CD4-positive, alpha-beta memory T cell (primary cell): ENCODE measurements at regions of chr3 and their contacts with region 1.

Region 1: DNA sequence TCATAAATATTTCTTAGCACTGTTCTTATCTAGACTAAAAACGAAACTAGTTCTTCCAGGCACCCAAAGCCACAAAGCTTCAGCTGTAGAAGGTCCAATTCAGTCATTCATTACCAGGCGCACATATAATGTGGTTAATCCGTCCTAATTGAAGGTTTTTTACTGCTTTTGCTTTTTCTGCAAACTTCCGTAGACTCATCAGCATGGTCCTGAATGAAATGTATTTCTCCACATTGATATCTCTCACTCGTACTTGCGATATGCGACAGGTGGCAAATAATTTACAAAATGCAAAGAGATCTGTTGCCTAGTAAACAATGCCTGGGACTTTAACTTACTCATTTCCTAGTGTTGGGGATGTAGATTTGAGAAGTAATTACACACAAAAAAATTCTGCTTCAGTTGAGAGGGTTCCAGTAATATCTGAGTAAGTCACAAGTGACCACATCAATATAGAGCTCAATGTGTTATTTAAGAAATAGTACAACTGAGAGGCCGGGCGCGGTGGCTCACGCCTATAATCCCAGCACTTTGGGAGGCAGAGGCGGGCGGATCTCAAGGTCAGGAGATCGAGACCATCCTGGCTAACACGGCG is 75.0 kb upstream of the MBNL1 start:
- DNase-seq: peak; percentile 63 to 79 (median 68)
- H3K4me3 ChIP-seq: peak overlapping the region; percentile 31 to 37
- H3K4me3 Mint-ChIP-seq: peak overlapping the region; percentile 81 to 97 (median 90)
- H3K27ac ChIP-seq: peak overlapping the region; percentile 62
- H3K27ac Mint-ChIP-seq: peak overlapping the region; percentile 89 to 98 (median 92)
- H3K4me1 ChIP-seq: peaks cover 82% of the 10 kb centered on the region
- H3K4me1 Mint-ChIP-seq: peaks cover 60 to 85% (median 72%) of the 10 kb centered on the region in 4 donors
- H3K27me3 ChIP-seq: no peaks in the 10 kb centered on the region
- H3K27me3 Mint-ChIP-seq: no peaks in the 10 kb centered on the region

Region 2: DNA sequence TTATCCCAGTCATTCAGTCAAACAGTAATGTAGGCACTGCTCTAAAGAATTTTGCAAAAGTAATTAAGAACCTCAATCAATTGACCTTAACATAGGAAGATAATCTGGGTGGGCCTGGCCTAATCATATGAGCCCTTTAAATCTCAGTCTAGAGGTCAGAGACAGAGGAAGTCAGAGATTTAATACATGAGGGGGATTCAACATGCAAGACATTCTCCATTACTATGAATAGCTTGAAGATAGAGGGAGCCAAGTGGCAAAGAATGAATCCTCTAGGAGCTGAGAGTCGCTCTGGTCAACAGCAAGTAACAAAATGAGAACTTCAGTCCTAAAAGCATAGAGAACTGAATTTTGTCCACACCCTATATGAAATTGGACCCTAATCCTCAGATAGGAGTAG is 35.9 kb after region 1 on chr3:
- CTCF ChIA-PET with region 1: interaction called, 4 read pairs
- POLR2A ChIA-PET with region 1: interaction called, 21 read pairs
- intact Hi-C with region 1: no loop called
- DNase-seq: no peak
- H3K4me3 ChIP-seq: no peak overlapping the region
- H3K4me3 Mint-ChIP-seq: peak overlapping the region in 2 of 8 donors; percentile 1 to 13
- H3K27ac ChIP-seq: no peak overlapping the region
- H3K27ac Mint-ChIP-seq: peak overlapping the region in 1 of 7 donors; percentile 1
- H3K4me1 ChIP-seq: peaks cover 42% of the 10 kb centered on the region
- H3K4me1 Mint-ChIP-seq: peaks cover 34 to 56% (median 44%) of the 10 kb centered on the region in 4 donors
- H3K27me3 ChIP-seq: no peaks in the 10 kb centered on the region
- H3K27me3 Mint-ChIP-seq: no peaks in the 10 kb centered on the region

Region 3: DNA sequence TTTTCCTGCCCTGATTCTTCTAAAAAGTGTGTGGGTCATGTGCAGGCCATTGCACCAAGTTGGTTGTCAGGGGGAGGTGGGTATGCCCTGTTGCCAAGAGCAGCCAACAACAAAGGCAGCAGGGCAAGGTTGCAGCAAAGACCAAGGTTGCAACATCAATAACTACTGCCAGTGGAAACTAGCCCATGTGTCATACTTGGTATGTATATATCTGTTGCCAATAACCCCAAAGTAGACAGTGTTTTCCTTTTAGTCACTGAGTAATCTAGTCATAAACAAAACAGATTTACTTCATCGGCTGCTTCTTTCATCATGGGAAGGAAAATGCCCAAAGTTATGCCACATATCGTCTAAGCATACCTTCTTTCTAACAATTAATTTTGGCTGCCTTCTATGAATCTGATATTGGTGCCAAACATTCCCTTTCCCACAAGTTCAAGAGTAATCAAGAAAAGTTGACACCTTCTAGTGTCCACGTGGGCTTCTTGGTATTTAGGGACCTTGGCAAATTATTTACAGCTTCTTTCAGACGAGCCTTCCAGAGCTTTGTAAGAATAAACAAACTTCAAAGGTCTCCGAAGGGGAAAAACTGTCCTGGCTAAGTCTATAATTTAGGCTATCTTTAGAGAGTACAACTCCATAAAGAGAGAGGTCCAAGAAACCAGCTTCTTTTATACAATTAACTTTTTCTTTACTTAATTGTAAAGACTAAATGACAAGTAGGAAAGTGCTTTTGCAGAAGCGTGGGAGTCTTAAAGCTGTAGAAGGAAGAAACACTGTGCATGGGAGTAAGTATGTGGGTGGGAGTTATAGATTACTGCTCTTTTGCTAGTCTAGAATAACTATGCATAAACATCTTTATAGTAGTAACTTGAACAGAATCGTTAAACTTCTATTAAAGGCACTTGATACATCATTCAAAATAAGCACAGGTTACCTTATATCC is 65.0 kb after region 1 on chr3:
- CTCF ChIA-PET with region 1: interaction called, 8 read pairs
- POLR2A ChIA-PET with region 1: interaction called, 189 read pairs
- intact Hi-C with region 1: no loop called
- DNase-seq: peak in 4 of 5 donors; percentile 56 to 94 (median 62)
- H3K4me3 ChIP-seq: peak overlapping the region in 1 of 2 donors; percentile 37
- H3K4me3 Mint-ChIP-seq: peak overlapping the region; percentile 74 to 92 (median 80)
- H3K27ac ChIP-seq: peak overlapping the region; percentile 75
- H3K27ac Mint-ChIP-seq: peak overlapping the region; percentile 91 to 96 (median 94)
- H3K4me1 ChIP-seq: peaks cover 96% of the 10 kb centered on the region
- H3K4me1 Mint-ChIP-seq: peaks cover 78 to 92% (median 85%) of the 10 kb centered on the region in 4 donors
- H3K27me3 ChIP-seq: no peaks in the 10 kb centered on the region
- H3K27me3 Mint-ChIP-seq: no peaks in the 10 kb centered on the region